ENCODE measurements at regions of chr17 and their contacts with region 1.

Region 1: DNA sequence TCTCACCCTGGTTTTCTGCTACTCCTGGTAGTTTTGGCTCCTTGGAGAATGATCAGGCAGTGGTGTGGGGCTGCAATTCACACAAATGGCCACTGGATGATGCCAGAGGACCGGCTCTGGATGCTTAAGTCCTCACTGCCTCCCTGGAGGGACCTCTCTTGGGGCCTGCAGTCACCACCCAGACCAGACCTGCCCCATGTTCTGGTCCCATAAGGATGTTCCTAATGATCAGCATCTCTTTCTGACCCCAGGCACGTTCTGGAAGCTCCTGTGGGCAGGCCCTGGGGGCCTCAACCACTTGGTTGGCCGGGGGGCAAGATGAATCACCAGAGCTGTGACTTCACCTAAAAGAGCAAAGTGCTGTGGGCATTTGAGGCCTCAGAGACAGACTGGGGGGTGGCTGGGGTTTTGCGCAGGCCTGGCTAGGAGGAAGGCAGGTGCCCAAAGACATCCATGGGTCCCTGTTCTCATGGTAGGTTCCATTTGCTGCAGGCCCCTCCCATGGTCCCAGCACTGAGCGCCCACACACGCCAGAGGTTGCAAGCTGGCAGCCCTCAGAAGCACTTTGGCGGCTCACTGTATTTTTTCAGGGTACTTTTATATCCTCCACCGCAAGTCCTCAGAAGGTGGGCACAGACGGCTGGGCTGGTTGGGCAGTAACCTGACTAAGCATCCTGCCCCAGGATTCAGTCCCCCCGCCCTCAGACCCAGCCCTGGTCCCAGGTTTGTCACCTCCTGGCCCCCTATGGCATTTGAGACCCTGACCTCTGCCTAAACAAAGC is 53.2 kb downstream of the NT5M start:
- DNase-seq: peak; percentile 73
- ATAC-seq: peak; percentile 74
- H3K4me3 ChIP-seq: no peak overlapping the region; a peak in 1 of 6 replicates
- H3K27ac ChIP-seq: no peak overlapping the region
- H3K4me1 ChIP-seq: peaks cover 36% of the 10 kb centered on the region
- H3K27me3 ChIP-seq: peaks cover 0 to 13% of the 10 kb centered on the region in 2 experiments; a peak in 1 of 5 replicates
- CTCF ChIP-seq: peak; percentile 96
- EP300 ChIP-seq: no peak; a peak in 1 of 4 replicates
- POLR2A ChIP-seq: no peak
- RAD21 ChIP-seq: peak; percentile 99

Region 2: DNA sequence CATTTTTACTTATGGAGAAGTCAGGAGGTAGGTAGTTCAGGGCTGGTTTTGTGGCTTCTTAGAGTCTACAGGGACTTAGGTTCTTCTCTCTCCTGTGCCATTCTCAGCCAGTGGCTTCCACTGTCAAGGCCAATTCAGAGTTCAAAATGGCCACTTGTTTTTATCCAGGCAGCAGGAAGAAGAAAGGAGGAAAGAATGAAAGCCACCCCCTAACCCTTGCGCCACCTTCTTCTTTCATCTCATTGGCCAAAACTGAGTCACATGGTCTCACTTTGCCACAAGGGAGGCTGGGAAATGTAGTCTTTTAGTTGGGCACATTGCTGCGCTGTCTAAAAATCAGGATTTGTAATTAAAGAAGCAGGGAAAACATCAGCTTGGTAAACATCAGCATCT is 59.7 kb after region 1 on chr17:
- CTCF ChIA-PET with region 1: interaction called, 3 read pairs
- POLR2A ChIA-PET with region 1: no interaction called
- in situ Hi-C with region 1: loop called (anchors 5 kb)
- intact Hi-C with region 1: no loop called
- DNase-seq: peak; percentile 91
- ATAC-seq: peak; percentile 73
- H3K4me3 ChIP-seq: no peak overlapping the region
- H3K27ac ChIP-seq: peak overlapping the region; percentile 82
- H3K4me1 ChIP-seq: peaks cover 50% of the 10 kb centered on the region
- H3K27me3 ChIP-seq: no peaks in the 10 kb centered on the region
- CTCF ChIP-seq: no peak
- EP300 ChIP-seq: no peak
- POLR2A ChIP-seq: no peak
- RAD21 ChIP-seq: no peak

Region 3: GRCh38 chr17:17440010-17440843 is 83.9 kb after region 1 on chr17:
- CTCF ChIA-PET with region 1: interaction called, 24 read pairs
- POLR2A ChIA-PET with region 1: interaction called, 3 read pairs
- in situ Hi-C with region 1: loop called (anchors 5 kb)
- intact Hi-C with region 1: loop called (anchors 1 kb)
- DNase-seq: peak; percentile 77
- ATAC-seq: peak; percentile 67
- H3K4me3 ChIP-seq: peak overlapping the region in 1 of 3 experiments; percentile 32; a peak in 1 of 6 replicates
- H3K27ac ChIP-seq: peak overlapping the region; percentile 42
- H3K4me1 ChIP-seq: peaks cover 60% of the 10 kb centered on the region
- H3K27me3 ChIP-seq: no peaks in the 10 kb centered on the region
- CTCF ChIP-seq: peak; percentile 81
- EP300 ChIP-seq: 0 out of 4 replicates have a peak, but pooled peaks of 1 of the 2 experiments have one; percentile 23
- POLR2A ChIP-seq: no peak
- RAD21 ChIP-seq: peak; percentile 67

Region 4: DNA sequence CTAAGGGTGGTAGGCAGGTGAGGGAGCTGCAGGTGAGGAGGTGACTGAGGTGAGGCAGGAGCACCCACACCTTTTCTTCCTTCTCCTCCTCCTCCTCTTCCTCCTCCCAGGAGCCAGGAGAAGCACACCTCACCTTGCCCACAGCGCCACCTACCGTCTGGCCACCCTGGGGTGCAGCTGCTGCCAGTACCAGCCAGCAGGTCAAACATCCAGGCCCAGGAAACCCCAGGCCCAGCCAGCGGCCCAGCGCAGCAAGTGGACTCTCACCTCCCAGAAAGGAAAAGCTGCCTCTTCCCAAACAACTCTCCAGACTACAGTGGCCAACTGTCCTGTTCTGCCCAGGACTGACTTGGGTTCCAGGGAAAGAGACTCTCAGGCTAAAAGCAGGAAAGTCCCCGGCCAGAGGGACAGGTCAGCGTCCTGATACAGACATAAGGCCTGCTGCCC is 212.4 kb after region 1 on chr17:
- CTCF ChIA-PET with region 1: interaction called, 40 read pairs
- POLR2A ChIA-PET with region 1: interaction called, 5 read pairs
- in situ Hi-C with region 1: loop called (anchors 5 kb)
- intact Hi-C with region 1: loop called (anchors 1 kb)
- DNase-seq: peak; percentile 54
- ATAC-seq: peak; percentile 38
- H3K4me3 ChIP-seq: no peak overlapping the region
- H3K27ac ChIP-seq: no peak overlapping the region
- H3K4me1 ChIP-seq: peaks cover 48% of the 10 kb centered on the region
- H3K27me3 ChIP-seq: no peaks in the 10 kb centered on the region
- CTCF ChIP-seq: peak; percentile 97
- EP300 ChIP-seq: no peak
- POLR2A ChIP-seq: no peak
- RAD21 ChIP-seq: peak; percentile 95

Region 5: GRCh38 chr17:17641621-17642409 is 285.5 kb after region 1 on chr17:
- CTCF ChIA-PET with region 1: interaction called, 45 read pairs
- POLR2A ChIA-PET with region 1: no interaction called
- in situ Hi-C with region 1: loop called (anchors 5 kb)
- intact Hi-C with region 1: loop called (anchors 1 kb)
- DNase-seq: peak; percentile 74
- ATAC-seq: peak; percentile 88
- H3K4me3 ChIP-seq: no peak overlapping the region
- H3K27ac ChIP-seq: no peak overlapping the region
- H3K4me1 ChIP-seq: peaks cover 13% of the 10 kb centered on the region
- H3K27me3 ChIP-seq: peaks cover 0 to 5% of the 10 kb centered on the region in 2 experiments; a peak in 2 of 5 replicates
- CTCF ChIP-seq: peak; percentile 96
- EP300 ChIP-seq: no peak
- POLR2A ChIP-seq: no peak
- RAD21 ChIP-seq: peak; percentile 89